Left ventricle myocardium inferior (tissue), 1 donor: ENCODE measurements at regions of chr7 and their contacts with region 1.

Region 1: DNA sequence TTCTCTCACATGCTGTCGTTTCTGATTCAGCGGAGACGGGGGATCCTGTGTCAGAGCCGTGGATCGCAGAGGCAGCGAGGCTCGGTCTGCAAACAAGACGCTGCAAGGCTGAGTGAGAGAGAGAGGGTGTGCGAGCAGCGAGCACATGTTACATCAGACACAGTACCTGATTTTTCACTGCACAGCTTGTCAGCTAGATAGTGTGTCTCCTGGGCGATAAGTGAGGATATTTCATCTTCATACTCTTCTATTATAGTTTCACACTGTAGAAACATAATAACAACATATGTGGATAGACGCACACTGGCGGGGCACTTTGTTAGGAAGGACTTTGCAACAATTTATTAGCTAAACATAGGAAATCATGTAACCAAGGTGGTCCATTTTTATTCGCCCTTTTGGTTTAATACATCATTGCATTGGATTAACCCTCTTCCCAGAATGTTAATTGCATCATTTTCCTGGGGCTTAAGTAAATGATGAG is 39.5 kb downstream of the CNPY1 start:
- DNase-seq: no peak
- H3K4me3 ChIP-seq: no peak overlapping the region
- H3K27ac ChIP-seq: no peak overlapping the region
- H3K4me1 ChIP-seq: peaks cover 11% of the 10 kb centered on the region
- H3K27me3 ChIP-seq: peaks cover 100% of the 10 kb centered on the region
- CTCF ChIP-seq: no peak

Region 2: DNA sequence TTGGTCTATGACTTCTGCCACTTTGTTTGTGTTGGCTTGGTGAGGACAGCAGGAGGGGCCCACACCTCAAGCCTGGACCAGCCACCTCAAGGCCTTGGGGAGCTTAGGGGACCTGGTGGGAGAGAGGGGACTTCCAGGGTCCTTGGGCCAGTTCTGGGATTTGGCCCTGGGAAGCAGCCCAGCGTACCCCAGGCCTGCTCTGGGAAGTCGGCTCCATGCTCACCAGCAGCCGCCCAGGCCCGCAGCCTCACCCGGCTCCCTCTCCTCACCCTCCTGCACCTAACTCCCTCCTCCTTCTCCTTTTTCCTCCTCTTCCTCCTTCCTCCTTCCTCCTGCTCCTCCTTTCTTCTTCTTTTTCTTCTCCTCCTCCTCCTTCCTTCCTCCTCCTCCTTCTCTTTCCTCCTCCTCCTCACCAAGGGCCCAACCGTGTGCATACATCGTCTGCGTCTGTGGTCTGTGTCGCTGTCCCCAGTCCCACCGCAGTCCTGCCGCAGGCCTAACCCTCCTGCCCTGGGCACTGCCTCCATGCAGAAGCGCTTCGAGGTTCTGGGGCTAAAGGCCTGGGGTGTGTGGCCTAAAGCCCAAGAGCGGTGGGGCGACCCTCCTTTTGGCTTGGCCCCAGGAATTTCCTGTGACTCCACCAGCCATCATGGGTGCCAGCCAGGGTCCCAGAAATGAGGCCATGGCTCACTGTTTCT is 43.6 kb before region 1 on chr7:
- intact Hi-C with region 1: loop called (anchors 5 kb)
- DNase-seq: no peak
- H3K4me3 ChIP-seq: no peak overlapping the region
- H3K27ac ChIP-seq: no peak overlapping the region
- H3K4me1 ChIP-seq: peaks cover 37% of the 10 kb centered on the region
- H3K27me3 ChIP-seq: peaks cover 100% of the 10 kb centered on the region
- CTCF ChIP-seq: no peak